Ovary (tissue), 10 donors: ENCODE measurements at regions of chr19 and their contacts with region 1.

Region 1: GRCh38 chr19:9903336-9903735 is 33.0 kb downstream of the OLFM2 start:
- DNase-seq: no peak
- H3K4me3 ChIP-seq: no peak overlapping the region
- H3K27ac ChIP-seq: no peak overlapping the region
- H3K4me1 ChIP-seq: no peaks in the 10 kb centered on the region
- H3K27me3 ChIP-seq: no peaks in the 10 kb centered on the region
- CTCF ChIP-seq: no peak
- EP300 ChIP-seq: no peak
- POLR2A ChIP-seq: no peak

Region 2: DNA sequence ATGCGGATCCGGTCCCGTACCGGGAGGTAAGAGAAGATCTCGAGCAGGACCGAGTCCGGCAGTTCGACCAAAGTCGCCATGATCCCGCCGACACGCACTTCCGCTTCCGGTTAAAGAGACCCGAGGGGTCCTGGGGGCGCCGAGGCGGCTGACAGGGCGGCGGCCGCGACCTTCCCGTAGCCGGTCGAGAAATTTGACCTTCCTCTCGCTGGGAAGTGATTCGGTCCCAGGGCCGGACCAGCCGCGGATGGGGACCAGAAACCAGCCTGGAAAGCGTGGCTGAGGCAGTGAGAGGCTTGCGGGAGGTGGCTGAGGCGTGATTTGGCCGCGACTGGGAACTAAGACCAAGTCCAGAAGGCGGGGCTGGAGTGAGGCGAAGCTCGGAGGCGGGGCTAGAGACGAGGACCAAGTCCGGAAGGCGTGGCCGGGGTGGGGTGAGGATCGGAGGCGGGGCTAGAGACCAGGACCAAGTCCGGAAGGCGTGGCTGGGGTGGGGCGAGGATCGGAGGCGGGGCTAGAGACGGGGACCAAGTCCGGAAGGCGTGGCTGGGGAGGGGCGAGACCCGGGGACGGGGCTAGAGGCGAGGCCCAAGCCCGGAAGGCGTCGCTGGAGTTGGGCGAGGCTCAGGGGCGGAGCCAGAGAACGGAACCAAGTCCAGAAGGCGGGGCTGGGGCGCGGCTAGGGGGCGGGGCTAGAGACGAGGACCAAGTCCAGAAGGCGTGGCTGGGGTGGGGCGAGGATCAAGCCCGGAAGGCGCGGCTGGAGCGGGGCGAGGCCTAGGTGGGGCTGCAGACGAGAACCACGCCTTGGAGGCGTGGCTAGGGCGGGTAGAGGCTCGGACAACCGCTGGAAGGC is 84.4 kb before region 1 on chr19 and contains the start of gene FBXL12:
- intact Hi-C with region 1: no loop called
- DNase-seq: peak; percentile 100
- H3K4me3 ChIP-seq: peak within 1 kb of the TSS; percentile 95
- H3K27ac ChIP-seq: peak within 1 kb of the TSS; percentile 84 to 94
- H3K4me1 ChIP-seq: peaks cover 1% of the 10 kb centered on the region
- H3K27me3 ChIP-seq: no peaks in the 10 kb centered on the region
- CTCF ChIP-seq: no peak
- EP300 ChIP-seq: no peak
- POLR2A ChIP-seq: peak; percentile 90
- total RNA-seq, gene FBXL12: 22.3 to 34.4 (median 27.7) TPM

Region 3: GRCh38 chr19:11673608-11674041 is 1770.3 kb after region 1 on chr19:
- intact Hi-C with region 1: loop called in 1 of 4 experiments (anchors 5 kb)
- DNase-seq: peak; percentile 76 to 81 (median 76)
- H3K4me3 ChIP-seq: peak overlapping the region; percentile 32
- H3K27ac ChIP-seq: no peak overlapping the region
- H3K4me1 ChIP-seq: peaks cover 3% of the 10 kb centered on the region
- H3K27me3 ChIP-seq: no peaks in the 10 kb centered on the region
- CTCF ChIP-seq: peak; percentile 51 to 66 (median 56)
- EP300 ChIP-seq: no peak
- POLR2A ChIP-seq: no peak